Mammary epithelial cell (primary cell): ENCODE measurements at regions of chr5 and their contacts with region 1.

Region 1: GRCh38 chr5:172904643-172905347 is 54.4 kb upstream of the RPL26L1 start:
- DNase-seq: peak; percentile 100
- H3K4me3 ChIP-seq: no peak overlapping the region
- H3K27ac ChIP-seq: peak overlapping the region; percentile 97
- H3K4me1 ChIP-seq: peaks cover 31% of the 10 kb centered on the region
- H3K27me3 ChIP-seq: no peaks in the 10 kb centered on the region
- CTCF ChIP-seq: no peak

Region 2: DNA sequence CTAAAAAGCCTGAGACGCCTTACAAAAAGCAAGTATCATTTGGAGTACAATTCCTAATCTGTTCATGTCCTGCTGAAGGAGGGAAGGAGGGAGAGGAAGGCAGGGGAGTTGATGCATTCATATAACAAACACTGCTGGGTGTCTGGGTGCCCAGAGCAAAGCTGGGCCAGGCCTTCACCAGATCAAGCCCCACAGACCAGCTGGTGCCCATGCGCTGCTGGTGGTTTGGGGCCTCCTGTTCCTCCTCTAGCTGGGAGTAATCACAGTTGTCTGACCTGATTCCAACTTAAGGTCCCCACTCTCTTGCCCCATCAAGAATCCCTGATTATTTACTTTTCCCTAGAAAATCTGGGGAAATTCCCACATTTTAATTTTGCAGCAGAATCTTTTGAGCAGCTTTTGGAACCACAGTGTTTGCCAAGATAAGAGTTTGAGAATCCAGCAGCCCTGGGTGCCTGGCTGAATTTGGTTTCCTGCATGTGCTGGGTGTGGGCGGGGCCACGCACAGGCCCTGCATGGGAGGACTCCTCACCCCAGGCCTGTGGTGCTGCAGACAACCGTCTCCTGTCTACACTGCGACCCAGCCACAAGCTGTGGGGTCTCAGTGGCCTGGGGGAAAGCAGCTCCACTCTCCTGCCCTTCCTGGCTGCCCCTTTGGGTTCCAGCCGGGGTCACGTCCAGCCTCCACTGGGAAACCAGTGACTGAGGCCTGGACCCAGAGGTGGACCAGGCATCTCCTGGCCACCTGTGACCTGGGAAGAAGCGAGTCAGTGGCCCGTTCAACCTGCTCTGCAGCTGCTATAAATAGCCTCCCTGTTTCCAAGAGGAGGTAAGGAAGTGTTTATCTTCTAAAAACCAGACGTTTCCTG is 216.2 kb before region 1 on chr5:
- CTCF ChIA-PET with region 1: no interaction called
- dilution Hi-C with region 1: no loop called
- in situ Hi-C with region 1: no loop called
- intact Hi-C with region 1: no loop called
- DNase-seq: peak; percentile 9
- H3K4me3 ChIP-seq: no peak overlapping the region
- H3K27ac ChIP-seq: no peak overlapping the region
- H3K4me1 ChIP-seq: no peaks in the 10 kb centered on the region
- H3K27me3 ChIP-seq: no peaks in the 10 kb centered on the region
- CTCF ChIP-seq: no peak

Region 3: DNA sequence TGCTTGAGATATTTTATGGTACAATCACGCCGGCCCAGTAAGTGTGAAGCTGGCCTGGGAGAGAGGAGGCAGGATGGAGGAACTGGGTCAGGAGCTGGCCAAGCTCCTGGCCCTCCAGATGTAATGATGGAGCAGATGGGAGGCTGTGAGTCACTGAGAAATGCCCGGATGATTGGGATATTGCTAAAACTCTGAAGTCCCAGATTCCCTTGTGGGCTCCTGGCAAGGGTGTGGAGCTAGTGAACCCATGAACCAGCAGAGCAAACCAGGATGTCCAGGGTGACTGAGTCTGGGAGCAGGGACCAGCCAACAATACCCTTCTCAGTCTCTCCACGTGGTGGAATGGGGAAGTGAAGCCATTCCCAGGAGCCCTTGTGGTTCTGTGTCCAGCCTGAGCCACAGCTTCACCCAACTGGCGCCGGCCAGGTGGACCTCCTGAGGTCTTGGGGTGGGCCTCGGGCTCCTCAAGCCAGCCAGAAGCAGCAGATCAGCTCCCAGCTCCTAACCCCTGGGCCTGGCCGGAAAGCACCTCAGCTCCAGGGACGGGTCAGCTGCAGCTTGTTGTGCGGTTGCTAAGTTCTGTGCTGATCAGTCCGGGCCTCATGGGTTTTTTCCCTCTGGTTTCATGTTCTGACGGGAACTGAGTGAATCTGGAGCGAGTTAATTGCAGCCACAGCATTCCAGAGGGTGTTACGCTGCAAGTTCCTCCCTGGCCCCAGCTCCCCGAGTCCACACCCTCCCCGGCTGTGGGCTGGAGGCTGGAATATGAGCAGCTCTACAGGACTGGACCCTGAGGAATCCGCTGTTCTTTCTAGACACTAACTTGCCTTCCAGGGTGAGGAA is 171.4 kb before region 1 on chr5:
- CTCF ChIA-PET with region 1: no interaction called
- dilution Hi-C with region 1: no loop called
- in situ Hi-C with region 1: no loop called
- intact Hi-C with region 1: loop called (anchors 1 kb)
- DNase-seq: peak; percentile 100
- H3K4me3 ChIP-seq: no peak overlapping the region
- H3K27ac ChIP-seq: peak overlapping the region; percentile 100
- H3K4me1 ChIP-seq: peaks cover 31% of the 10 kb centered on the region
- H3K27me3 ChIP-seq: no peaks in the 10 kb centered on the region
- CTCF ChIP-seq: no peak

Region 4: DNA sequence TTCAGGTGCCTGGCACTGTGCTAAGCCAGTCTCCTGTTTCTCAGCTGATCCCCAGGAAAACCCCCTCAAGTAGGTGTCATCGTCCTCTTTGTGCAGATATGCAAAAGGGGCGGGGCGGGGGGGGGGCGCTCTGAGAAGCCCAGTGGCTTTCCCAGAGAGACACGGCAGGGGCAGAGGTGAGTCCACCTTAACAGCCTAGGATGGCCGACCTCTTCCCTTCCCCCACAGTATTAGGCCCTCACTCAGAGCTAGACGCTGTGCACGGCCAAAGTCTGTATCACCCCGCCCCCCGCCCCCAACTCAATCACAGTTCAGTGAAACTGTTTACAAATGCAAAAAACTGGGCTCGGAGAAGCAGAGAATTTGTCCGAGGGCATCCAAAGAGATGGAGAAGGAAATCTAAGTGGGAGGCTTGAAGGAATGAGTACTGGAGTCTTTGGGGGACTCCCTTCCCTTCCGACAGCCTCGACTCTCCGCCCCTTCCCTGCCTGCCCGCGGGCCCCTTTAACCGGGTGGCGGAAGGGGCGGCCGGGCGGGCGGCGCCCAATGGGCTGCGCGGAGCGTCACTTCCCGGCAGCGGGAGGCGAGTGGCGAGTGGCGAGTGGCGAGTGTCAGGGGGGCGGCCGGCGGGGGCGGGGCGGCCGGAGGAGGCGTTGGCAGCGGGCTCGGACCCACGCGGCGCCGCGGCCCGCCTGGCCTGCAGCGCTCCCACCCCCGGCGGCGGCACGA is 70.9 kb before region 1 on chr5 and contains the start of gene ERGIC1:
- CTCF ChIA-PET with region 1: no interaction called
- dilution Hi-C with region 1: no loop called
- in situ Hi-C with region 1: no loop called
- intact Hi-C with region 1: loop called (anchors 5 kb)
- DNase-seq: peak; percentile 78
- H3K4me3 ChIP-seq: peak within 1 kb of the TSS; percentile 73 to 87 (median 82)
- H3K27ac ChIP-seq: peak within 1 kb of the TSS; percentile 72
- H3K4me1 ChIP-seq: peaks cover 8% of the 10 kb centered on the region
- H3K27me3 ChIP-seq: no peaks in the 10 kb centered on the region
- CTCF ChIP-seq: no peak
- total RNA-seq, gene ERGIC1: 58.8 to 98.6 TPM

Region 5: GRCh38 chr5:172886974-172887501 is 17.8 kb before region 1 on chr5:
- CTCF ChIA-PET with region 1: no interaction called
- dilution Hi-C with region 1: no loop called
- in situ Hi-C with region 1: no loop called
- intact Hi-C with region 1: loop called (anchors 1 kb)
- DNase-seq: peak; percentile 86
- H3K4me3 ChIP-seq: no peak overlapping the region
- H3K27ac ChIP-seq: peak overlapping the region; percentile 46
- H3K4me1 ChIP-seq: peaks cover 13% of the 10 kb centered on the region
- H3K27me3 ChIP-seq: no peaks in the 10 kb centered on the region
- CTCF ChIP-seq: no peak